ENCODE measurements at regions of chr7 and their contacts with region 1.

Region 1: GRCh38 chr7:33079763-33080725 is 17.5 kb upstream of the NT5C3A start:
- DNase-seq: no peak
- H3K4me3 ChIP-seq: no peak overlapping the region
- H3K27ac ChIP-seq: no peak overlapping the region
- H3K4me1 ChIP-seq: no peaks in the 10 kb centered on the region
- H3K27me3 ChIP-seq: peaks cover 40% of the 10 kb centered on the region; the same call in 1 of the 2 replicates
- CTCF ChIP-seq: no peak

Region 2: DNA sequence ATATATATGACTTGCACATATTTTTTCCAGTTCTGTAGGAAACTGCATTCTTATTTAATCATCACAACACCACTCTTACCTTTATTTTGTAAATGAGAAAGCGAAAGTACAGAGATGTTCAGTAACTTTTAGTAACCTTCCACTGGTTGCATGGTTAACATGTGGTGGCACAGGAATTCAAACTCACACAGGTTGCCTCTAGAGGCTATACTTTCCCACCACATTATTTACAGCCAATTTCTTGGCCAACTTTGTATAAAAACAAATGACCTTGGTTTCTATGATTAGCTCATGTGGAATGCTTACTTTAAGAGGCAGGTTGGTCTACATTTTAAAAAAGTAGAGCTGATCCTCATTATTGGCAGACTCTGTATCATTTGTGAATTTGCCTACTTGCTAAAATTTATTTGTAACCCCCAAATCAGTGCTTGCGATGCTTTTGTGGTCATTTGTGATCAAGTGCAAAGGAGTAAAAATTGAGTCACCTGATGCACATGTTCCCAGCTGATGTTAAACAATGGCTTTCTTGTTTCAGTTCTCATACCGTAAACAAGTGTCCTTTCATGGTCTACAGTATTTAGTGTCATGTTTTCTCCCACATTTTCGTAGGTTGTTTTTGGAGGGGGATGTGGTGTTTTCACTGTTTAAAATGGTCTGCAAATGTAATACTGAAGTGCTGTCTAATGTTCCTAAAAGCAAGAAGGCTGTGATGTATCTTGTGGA is 64.1 kb after region 1 on chr7:
- CTCF ChIA-PET with region 1: no interaction called
- POLR2A ChIA-PET with region 1: no interaction called
- intact Hi-C with region 1: no loop called
- DNase-seq: peak in 1 of 2 experiments; percentile 59
- H3K4me3 ChIP-seq: no peak overlapping the region
- H3K27ac ChIP-seq: no peak overlapping the region
- H3K4me1 ChIP-seq: no peaks in the 10 kb centered on the region
- H3K27me3 ChIP-seq: no peaks in the 10 kb centered on the region
- CTCF ChIP-seq: no peak

Region 3: GRCh38 chr7:33185786-33186185 is 105.7 kb after region 1 on chr7:
- CTCF ChIA-PET with region 1: interaction called, 12 read pairs
- POLR2A ChIA-PET with region 1: no interaction called
- intact Hi-C with region 1: no loop called
- DNase-seq: peak; percentile 23 to 47
- H3K4me3 ChIP-seq: no peak overlapping the region
- H3K27ac ChIP-seq: no peak overlapping the region
- H3K4me1 ChIP-seq: no peaks in the 10 kb centered on the region
- H3K27me3 ChIP-seq: no peaks in the 10 kb centered on the region
- CTCF ChIP-seq: peak; percentile 85

Region 4: GRCh38 chr7:33243319-33243881 is 163.4 kb after region 1 on chr7:
- CTCF ChIA-PET with region 1: no interaction called
- POLR2A ChIA-PET with region 1: no interaction called
- intact Hi-C with region 1: no loop called
- DNase-seq: peak in 1 of 2 experiments; percentile 47
- H3K4me3 ChIP-seq: no peak overlapping the region
- H3K27ac ChIP-seq: no peak overlapping the region
- H3K4me1 ChIP-seq: no peaks in the 10 kb centered on the region
- H3K27me3 ChIP-seq: no peaks in the 10 kb centered on the region
- CTCF ChIP-seq: peak; percentile 91

Measured in PC-9 (cell line).